Endothelial cell of umbilical vein (primary cell): ENCODE measurements at regions of chr17 and their contacts with region 1.

Region 1: DNA sequence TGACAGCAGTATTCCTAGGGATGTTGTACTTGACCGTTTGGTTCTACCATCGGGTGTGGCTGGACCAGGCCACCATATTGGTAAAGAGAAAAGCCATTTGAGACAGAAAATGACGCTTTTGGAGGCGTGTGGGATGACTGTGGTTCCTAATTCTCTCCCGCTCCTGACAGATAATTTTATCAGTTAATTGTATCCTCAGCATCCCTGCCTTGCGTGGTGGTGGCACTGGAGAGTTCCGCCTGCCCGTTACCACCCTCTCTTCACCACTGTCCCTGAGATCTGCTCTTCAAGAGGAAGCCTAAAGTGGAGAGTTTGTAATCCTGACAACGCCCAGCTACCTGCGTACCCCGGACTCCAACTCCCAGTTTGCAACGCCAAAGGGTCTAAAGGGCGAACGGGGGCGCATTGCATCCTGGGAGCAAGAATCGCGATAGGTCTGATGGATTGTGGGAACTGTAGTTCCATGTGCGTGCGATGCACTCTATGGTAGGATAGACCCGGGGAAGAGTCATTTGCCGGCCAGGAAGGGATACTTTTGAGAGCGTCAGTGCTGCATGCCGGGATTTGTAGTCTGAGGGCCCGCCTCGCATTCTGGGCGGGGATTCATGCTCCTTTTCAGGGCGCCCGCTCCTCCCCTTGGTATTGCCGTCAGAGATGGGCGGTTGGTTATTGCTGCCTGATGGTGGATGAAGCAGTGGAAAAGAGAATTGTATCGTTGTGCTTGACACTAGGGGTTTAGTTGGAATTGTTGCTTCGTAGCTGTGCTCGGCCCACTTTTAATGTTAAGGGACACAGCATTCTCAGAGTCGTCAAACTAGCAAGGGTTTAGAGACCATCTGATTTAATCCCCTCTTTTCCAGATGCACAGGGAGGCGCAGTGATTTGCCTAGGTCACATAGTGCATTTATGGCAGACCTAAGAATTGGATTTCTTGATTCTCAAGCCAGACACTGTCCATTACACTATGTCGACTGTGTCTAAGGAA is 965 bp upstream of the PHF12 start:
- DNase-seq: peak; percentile 100
- H3K4me3 ChIP-seq: peak overlapping the region in 2 of 3 experiments; percentile 65 to 72
- H3K27ac ChIP-seq: peak overlapping the region; percentile 80
- H3K4me1 ChIP-seq: peaks cover 17% of the 10 kb centered on the region
- H3K27me3 ChIP-seq: no peaks in the 10 kb centered on the region
- CTCF ChIP-seq: no peak
- POLR2A ChIP-seq: peak; percentile 17

Region 2: DNA sequence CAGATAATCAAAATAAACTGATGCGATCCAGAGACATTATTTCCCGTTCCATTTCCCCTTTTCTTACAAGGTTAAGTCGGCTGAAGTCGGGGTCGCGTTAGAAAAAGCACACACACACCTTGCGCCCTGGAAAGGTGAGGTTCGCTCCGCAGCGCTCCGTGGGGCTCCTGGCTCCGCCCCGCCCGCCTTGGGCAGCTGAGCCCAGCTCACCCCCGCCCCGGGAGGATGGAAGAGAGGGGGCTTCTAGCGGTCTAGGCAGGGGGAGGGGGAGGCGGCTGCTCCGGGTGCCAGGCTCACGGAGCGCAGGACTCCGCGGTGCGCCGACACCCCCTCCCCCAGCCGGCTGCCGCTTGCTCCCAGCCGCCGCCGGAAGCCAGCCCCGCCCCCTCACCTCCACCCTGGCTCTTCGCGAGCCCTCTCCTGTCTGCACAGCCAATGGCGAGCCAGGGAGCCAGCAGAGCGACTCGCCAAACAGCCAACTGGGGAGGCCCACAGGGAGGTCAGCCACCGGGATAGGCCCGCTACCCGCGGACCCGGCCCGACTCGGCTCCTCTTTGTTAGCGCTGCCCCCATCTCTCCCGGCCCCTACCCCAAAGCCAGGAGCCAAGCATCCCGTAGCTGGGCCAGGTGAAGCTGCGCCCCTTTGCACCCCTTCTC is 140.1 kb before region 1 on chr17:
- CTCF ChIA-PET with region 1: no interaction called
- POLR2A ChIA-PET with region 1: no interaction called
- dilution Hi-C with region 1: no loop called
- intact Hi-C with region 1: loop called (anchors 2 kb)
- DNase-seq: peak; percentile 97
- H3K4me3 ChIP-seq: peak overlapping the region; percentile 90 to 98 (median 95)
- H3K27ac ChIP-seq: peak overlapping the region; percentile 95
- H3K4me1 ChIP-seq: peaks cover 44% of the 10 kb centered on the region
- H3K27me3 ChIP-seq: no peaks in the 10 kb centered on the region
- CTCF ChIP-seq: no peak
- POLR2A ChIP-seq: peak; percentile 74

Region 3: DNA sequence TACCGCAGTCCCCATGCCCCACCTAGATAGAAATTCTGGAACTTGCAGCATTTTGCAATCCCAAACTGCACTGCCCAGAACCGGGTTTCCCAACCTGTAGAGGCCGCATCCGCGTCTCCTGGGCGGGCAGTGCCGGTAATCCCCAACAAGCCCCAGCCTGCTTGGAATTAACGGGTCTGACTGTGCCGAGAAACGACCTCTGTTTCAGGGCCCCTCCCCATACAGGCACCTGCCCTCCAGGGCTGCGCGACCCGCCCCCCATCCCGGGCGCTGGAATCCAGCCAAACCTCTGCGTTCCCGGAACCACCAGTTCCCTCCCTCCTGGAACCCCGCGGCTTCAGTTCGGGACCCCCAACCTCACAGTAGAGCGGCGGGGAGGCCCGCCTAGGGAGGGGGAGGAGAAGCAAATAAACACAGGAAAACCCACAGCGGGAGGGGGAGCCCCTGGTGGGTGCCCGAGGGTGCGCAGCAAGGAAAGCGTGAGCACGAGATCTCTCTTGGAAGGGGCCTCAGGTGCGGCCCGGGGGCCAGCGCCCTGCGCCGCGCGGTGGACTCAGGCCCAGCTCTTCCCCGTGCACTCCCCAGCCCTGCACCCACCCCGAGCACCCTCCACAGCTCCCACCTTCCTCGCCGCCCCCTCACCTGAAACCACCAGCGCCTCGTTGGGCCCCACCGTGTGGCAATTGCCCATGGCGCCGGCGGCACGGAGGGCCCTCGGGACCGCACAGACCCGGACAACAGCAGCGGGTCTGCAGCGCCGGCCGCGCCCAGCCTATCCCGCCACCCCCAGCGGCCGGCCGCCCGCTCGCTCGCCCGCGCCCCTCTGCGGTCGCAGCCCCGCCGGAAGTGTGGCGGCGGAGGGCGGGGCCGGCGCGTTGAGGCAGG is 55.2 kb before region 1 on chr17 and contains the start of gene FLOT2:
- CTCF ChIA-PET with region 1: interaction called, 14 read pairs
- POLR2A ChIA-PET with region 1: interaction called, 3 read pairs
- dilution Hi-C with region 1: no loop called
- intact Hi-C with region 1: loop called (anchors 5 kb)
- DNase-seq: peak; percentile 22
- H3K4me3 ChIP-seq: peak within 1 kb of the TSS; percentile 63 to 85 (median 66)
- H3K27ac ChIP-seq: peak within 1 kb of the TSS; percentile 19
- H3K4me1 ChIP-seq: peaks cover 41% of the 10 kb centered on the region
- H3K27me3 ChIP-seq: no peaks in the 10 kb centered on the region
- CTCF ChIP-seq: peak; percentile 4 to 31
- POLR2A ChIP-seq: peak; percentile 80
- total RNA-seq, gene FLOT2: 131 and 169 TPM in 2 replicates

Region 4: GRCh38 chr17:28908640-28909167 is 43.6 kb before region 1 on chr17:
- CTCF ChIA-PET with region 1: interaction called, 34 read pairs
- POLR2A ChIA-PET with region 1: no interaction called
- dilution Hi-C with region 1: no loop called
- intact Hi-C with region 1: loop called (anchors 1 kb)
- DNase-seq: peak; percentile 83
- H3K4me3 ChIP-seq: no peak overlapping the region
- H3K27ac ChIP-seq: peak overlapping the region; percentile 22
- H3K4me1 ChIP-seq: peaks cover 21% of the 10 kb centered on the region
- H3K27me3 ChIP-seq: no peaks in the 10 kb centered on the region
- CTCF ChIP-seq: no peak
- POLR2A ChIP-seq: no peak

Region 5: GRCh38 chr17:28925912-28926365 is 26.3 kb before region 1 on chr17:
- CTCF ChIA-PET with region 1: interaction called, 28 read pairs
- POLR2A ChIA-PET with region 1: no interaction called
- dilution Hi-C with region 1: no loop called
- intact Hi-C with region 1: loop called (anchors 1 kb)
- DNase-seq: peak; percentile 88
- H3K4me3 ChIP-seq: peak overlapping the region in 1 of 3 experiments; percentile 57
- H3K27ac ChIP-seq: peak overlapping the region; percentile 89
- H3K4me1 ChIP-seq: peaks cover 22% of the 10 kb centered on the region
- H3K27me3 ChIP-seq: no peaks in the 10 kb centered on the region
- CTCF ChIP-seq: no peak
- POLR2A ChIP-seq: no peak

Region 6: DNA sequence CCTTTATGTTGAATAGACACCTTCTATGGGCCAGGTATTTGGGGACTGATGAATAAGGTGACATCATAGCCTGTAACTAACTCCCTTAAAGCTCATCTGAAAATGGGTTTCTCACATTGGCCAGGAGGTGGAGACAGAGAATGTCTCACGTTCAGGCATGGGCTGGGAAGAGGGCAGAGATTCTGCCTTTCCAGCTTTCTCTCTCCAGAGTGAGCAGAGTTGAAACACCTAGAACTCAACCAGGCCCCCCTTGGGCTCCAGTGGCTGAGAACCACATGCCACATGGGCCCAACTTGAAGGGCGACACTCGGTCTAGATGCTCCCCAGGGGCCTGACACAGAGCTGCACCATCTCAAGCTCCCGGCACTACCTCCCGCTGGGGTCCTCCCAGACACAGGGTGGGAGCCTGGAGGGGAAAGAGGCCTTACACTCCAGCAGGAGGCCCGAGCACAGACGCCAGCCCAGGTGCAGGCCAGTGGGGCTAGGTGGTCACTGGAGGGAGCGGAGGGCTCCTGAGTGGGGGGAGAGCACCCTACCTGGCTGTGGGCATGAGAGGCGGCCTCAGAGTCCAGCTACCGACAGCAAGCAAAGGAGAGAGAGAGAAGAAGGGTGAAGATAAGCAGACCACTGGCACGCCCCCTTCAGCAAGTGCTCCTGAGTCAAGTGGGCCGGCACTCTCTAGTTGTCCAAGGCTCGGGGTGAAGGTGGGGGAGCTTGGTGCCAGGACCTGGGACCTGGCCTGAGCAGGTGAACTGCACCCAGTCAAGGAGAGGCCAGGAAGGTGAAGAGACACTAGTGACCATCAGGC is 172.0 kb after region 1 on chr17:
- CTCF ChIA-PET with region 1: interaction called, 1,079 read pairs
- POLR2A ChIA-PET with region 1: no interaction called
- dilution Hi-C with region 1: no loop called
- intact Hi-C with region 1: no loop called
- DNase-seq: peak; percentile 61
- H3K4me3 ChIP-seq: no peak overlapping the region
- H3K27ac ChIP-seq: no peak overlapping the region
- H3K4me1 ChIP-seq: no peaks in the 10 kb centered on the region
- H3K27me3 ChIP-seq: no peaks in the 10 kb centered on the region
- CTCF ChIP-seq: peak; percentile 60 to 61
- POLR2A ChIP-seq: no peak